Activated T-helper 1 cell treated with anti-CD3 and anti-CD28 coated beads, Interleukin-12 subunit alpha, Interleukin-12 subunit beta, Interleukin-2, Interleukin-4 antibody, amounts not matched to agents 30 ng/mL and 10 ng/mL and 1 ng/mL, durations not matched to agents 14 hours and 24 hours and 36 hours (primary cell): ENCODE measurements at regions of chr6 and their contacts with region 1.

Region 1: DNA sequence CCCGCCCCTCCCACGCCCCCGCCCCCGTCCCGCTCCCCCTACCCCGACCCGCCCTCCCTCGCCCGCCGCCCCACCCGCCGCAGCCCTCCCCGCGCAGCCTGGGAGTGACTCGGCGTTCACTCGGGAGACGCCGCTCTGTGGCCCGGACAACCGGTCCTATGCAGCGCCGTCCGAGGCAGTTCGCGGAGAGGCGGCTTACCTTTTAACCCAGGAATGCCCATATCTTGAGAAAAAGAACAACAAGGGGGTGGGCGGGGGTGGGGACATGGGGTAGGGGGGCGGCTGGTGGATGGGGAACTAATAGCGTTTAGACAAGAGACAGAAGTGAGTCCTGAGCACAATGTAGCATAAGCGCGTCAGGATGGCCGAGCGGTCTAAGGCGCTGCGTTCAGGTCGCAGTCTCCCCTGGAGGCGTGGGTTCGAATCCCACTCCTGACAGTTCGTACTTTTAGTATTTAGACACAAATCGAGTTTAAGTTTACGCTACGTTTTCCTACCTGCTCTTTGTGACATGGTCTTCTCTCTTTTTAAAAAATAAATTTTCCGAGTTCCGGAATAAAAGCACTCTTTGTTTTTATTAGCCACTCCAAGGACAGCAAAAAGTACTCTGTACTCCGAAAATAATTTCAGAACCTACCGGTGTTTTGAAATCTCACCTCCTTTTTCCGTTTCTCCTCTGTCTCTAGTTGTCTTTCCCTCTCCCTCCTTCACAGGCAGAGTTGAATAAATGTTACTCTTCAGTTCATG is 17.1 kb upstream of the HMGN4 start:
- DNase-seq: peak; percentile 78
- H3K4me3 Mint-ChIP-seq: peak overlapping the region; percentile 83
- H3K27ac Mint-ChIP-seq: peak overlapping the region; percentile 97
- H3K4me1 Mint-ChIP-seq: peaks cover 35% of the 10 kb centered on the region
- H3K27me3 Mint-ChIP-seq: peaks cover 3% of the 10 kb centered on the region

Region 2: GRCh38 chr6:26532699-26533531 is 11.9 kb after region 1 on chr6:
- intact Hi-C with region 1: loop called (anchors 1 kb)
- DNase-seq: peak; percentile 86
- H3K4me3 Mint-ChIP-seq: peak overlapping the region; percentile 94
- H3K27ac Mint-ChIP-seq: peak overlapping the region; percentile 95
- H3K4me1 Mint-ChIP-seq: peaks cover 46% of the 10 kb centered on the region
- H3K27me3 Mint-ChIP-seq: peaks cover 3% of the 10 kb centered on the region

Region 3: GRCh38 chr6:26553635-26554446 is 32.8 kb after region 1 on chr6:
- intact Hi-C with region 1: loop called (anchors 1 kb)
- DNase-seq: peak; percentile 72
- H3K4me3 Mint-ChIP-seq: no peak overlapping the region
- H3K27ac Mint-ChIP-seq: no peak overlapping the region
- H3K4me1 Mint-ChIP-seq: peaks cover 18% of the 10 kb centered on the region
- H3K27me3 Mint-ChIP-seq: peaks cover 2% of the 10 kb centered on the region